MCF 10A (cell line): ENCODE measurements at regions of chr20 and their contacts with region 1.

Region 1: GRCh38 chr20:38893565-38894090 is 32.6 kb upstream of the FAM83D start:
- DNase-seq: peak; percentile 59
- H3K4me3 Mint-ChIP-seq: peak overlapping the region; percentile 57
- H3K27ac Mint-ChIP-seq: no peak overlapping the region
- H3K4me1 Mint-ChIP-seq: peaks cover 10% of the 10 kb centered on the region
- H3K27me3 Mint-ChIP-seq: peaks cover 14% of the 10 kb centered on the region
- CTCF ChIP-seq: peak; percentile 92

Region 2: DNA sequence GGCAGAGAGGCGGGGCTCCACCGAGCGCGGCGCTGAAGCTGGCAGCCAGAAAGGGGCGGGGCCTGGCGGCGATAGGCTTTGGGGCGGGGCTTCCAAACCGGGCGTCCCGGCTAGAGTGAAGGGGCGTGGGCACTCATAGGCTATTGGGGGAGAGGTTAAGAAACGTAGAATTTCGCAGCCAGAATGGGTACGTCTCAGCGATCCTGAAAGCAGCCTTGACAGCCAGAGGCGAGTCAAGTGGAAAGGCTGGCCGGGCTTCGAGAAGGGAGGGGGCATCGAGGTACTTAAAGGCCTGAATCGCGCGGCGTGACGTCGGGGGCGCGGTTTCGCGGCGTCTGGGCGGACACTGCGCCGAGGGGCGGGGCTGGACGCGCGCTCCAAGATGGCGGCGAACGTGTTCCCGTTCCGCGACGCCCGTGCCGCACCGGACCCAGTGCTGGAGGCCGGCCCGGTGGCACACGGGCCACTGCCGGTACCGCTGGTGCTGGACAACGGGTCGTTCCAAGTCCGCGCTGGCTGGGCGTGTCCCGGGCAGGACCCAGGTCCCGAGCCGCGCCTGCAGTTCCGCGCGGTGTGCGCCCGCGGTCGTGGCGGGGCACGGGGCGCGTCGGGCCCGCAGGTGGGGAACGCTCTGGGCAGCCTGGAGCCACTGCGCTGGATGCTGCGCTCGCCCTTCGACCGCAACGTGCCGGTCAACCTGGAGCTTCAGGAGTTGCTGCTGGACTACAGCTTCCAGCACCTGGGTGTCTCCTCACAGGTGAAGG is 145.3 kb before region 1 on chr20 and contains the start of gene ACTR5:
- CTCF ChIA-PET with region 1: interaction called, 131 read pairs
- POLR2A ChIA-PET with region 1: interaction called, 5 read pairs
- intact Hi-C with region 1: loop called (anchors 1 kb)
- DNase-seq: peak; percentile 83
- H3K4me3 Mint-ChIP-seq: peak within 1 kb of the TSS; percentile 93
- H3K27ac Mint-ChIP-seq: peak within 1 kb of the TSS; percentile 95
- H3K4me1 Mint-ChIP-seq: peaks cover 18% of the 10 kb centered on the region
- H3K27me3 Mint-ChIP-seq: no peaks in the 10 kb centered on the region
- CTCF ChIP-seq: no peak
- total RNA-seq, gene ACTR5: 6.0 and 6.9 TPM in 2 replicates

Region 3: GRCh38 chr20:38764567-38765355 is 128.9 kb before region 1 on chr20:
- CTCF ChIA-PET with region 1: interaction called, 32 read pairs
- POLR2A ChIA-PET with region 1: interaction called, 5 read pairs
- intact Hi-C with region 1: no loop called
- DNase-seq: peak; percentile 87
- H3K4me3 Mint-ChIP-seq: no peak overlapping the region
- H3K27ac Mint-ChIP-seq: no peak overlapping the region
- H3K4me1 Mint-ChIP-seq: peaks cover 16% of the 10 kb centered on the region
- H3K27me3 Mint-ChIP-seq: no peaks in the 10 kb centered on the region
- CTCF ChIP-seq: no peak

Region 4: DNA sequence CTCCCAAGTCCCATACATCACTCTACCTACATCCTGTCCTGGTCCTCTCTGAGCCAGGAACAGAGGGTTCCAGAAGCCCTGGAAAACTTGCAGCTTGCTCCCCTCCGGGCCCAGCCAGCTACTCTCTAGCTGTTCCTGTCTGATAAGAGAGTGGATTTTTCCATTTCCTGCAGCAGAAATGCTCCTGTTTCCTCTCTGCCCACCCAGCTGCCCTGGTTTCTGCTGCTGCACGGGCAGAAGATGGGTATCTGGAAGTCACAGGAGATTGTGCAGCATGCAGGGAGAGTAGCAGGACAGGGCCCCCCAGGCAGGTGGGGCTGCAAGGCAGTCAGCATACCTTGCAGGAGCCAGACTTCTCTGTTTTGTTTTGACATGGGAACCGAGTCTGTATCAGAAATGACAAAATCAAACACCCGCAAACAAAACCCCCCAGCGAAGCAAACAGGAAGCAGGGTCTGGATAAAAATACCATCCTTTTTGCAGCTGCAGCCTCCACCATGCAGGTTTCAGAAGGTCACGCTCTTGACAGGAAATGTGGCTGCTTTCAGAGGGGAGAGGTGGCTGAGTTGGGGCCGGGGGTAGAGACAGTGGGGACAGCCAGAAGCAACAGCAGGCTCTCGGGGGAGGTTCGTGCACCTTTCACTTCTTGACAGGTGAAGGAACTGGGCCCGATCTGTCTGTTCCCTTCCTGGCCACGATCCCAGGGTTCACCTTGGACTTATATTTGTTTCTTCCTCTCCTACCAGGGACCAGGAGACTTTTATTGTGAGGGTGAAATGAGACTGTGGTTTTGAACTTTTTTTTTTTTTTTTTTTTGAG is 18.2 kb before region 1 on chr20:
- CTCF ChIA-PET with region 1: interaction called, 112 read pairs
- POLR2A ChIA-PET with region 1: interaction called, 4 read pairs
- intact Hi-C with region 1: no loop called
- DNase-seq: no peak
- H3K4me3 Mint-ChIP-seq: no peak overlapping the region
- H3K27ac Mint-ChIP-seq: no peak overlapping the region
- H3K4me1 Mint-ChIP-seq: peaks cover 21% of the 10 kb centered on the region
- H3K27me3 Mint-ChIP-seq: no peaks in the 10 kb centered on the region
- CTCF ChIP-seq: no peak

Region 5: DNA sequence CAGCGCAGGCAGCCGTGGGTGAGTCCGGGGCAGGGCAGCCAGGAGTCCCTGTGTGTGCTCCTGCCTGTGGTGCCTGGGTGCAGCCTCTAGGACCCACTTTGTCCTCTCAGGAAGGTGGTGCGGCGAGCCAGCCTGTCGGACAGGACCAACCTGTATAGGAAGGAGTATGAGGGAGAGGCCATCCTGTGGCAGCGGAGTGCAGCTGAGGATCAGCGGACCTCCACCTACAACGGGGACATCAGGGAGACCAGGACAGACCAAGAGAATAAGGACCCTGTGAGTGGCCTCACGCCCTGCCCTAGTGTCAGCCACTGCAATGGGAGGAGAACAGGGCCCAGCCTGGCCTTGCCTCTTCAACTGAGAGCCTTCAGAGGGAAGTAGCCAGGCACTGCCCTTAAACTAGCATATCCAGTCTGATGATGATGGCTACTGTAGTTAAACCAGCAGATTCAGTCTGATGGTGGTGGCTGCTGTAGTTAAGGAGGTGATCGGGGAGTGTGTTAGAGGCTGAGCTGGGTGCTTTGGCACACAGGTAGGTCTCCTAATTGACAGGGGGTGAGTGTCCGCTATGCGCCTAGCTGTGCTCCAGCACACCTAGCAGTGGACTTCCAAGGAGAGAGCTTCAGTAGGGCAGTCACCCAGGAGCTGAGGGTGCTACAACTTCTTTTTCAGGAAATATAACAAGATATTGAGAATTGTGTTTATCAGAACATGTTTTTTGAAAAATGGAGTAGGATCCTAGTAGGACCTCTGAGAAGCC is 14.5 kb after region 1 on chr20:
- CTCF ChIA-PET with region 1: interaction called, 16 read pairs
- POLR2A ChIA-PET with region 1: no interaction called
- intact Hi-C with region 1: no loop called
- DNase-seq: no peak
- H3K4me3 Mint-ChIP-seq: no peak overlapping the region
- H3K27ac Mint-ChIP-seq: no peak overlapping the region
- H3K4me1 Mint-ChIP-seq: no peaks in the 10 kb centered on the region
- H3K27me3 Mint-ChIP-seq: peaks cover 40% of the 10 kb centered on the region
- CTCF ChIP-seq: no peak

Region 6: GRCh38 chr20:38926142-38926933 is 32.7 kb after region 1 on chr20 and contains the start of gene FAM83D:
- CTCF ChIA-PET with region 1: interaction called, 32 read pairs
- POLR2A ChIA-PET with region 1: interaction called, 3 read pairs
- intact Hi-C with region 1: no loop called
- DNase-seq: peak; percentile 98
- H3K4me3 Mint-ChIP-seq: peak within 1 kb of the TSS; percentile 77
- H3K27ac Mint-ChIP-seq: no peak within 1 kb of the TSS
- H3K4me1 Mint-ChIP-seq: peaks cover 19% of the 10 kb centered on the region
- H3K27me3 Mint-ChIP-seq: no peaks in the 10 kb centered on the region
- CTCF ChIP-seq: peak; percentile 56
- total RNA-seq, gene FAM83D: 10.7 and 18.4 TPM in 2 replicates